K562 (cell line): ENCODE measurements at regions of chr22 and their contacts with region 1.

Region 1: GRCh38 chr22:40679964-40680818 is 907 bp downstream of the MCHR1 start:
- DNase-seq: no peak
- ATAC-seq: no peak
- H3K4me3 ChIP-seq: no peak overlapping the region
- H3K27ac ChIP-seq: no peak overlapping the region
- H3K4me1 ChIP-seq: peaks cover 0 to 13% of the 10 kb centered on the region in 2 experiments; a peak in 3 of 5 replicates
- H3K27me3 ChIP-seq: peaks cover 6 to 35% of the 10 kb centered on the region in 2 experiments; a peak in 4 of 5 replicates
- CTCF ChIP-seq: 0 out of 6 replicates have a peak, but pooled peaks of 1 of the 3 experiments have one; percentile 6
- EP300 ChIP-seq: no peak
- POLR2A ChIP-seq: no peak
- RAD21 ChIP-seq: no peak

Region 2: DNA sequence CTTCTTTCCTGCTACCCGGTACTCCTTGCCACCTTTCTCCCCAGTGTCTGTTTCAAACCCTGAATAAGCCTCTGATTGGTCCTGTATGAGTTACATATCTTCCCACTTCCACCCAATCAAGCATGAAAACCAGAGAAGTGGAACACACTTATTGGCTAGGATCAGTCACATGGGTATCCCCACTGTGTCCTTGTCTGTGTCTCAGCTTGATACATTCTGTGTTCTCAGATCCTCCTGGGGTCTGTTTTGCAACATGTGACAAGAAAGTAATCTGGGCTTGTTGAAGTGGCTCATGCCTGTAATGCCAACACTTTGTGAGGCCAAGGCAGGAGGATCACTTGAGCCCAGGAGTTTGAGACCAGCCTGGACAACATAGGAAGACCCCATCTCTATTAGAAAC is 23.0 kb after region 1 on chr22:
- CTCF ChIA-PET with region 1: no interaction called
- POLR2A ChIA-PET with region 1: no interaction called
- in situ Hi-C with region 1: no loop called
- intact Hi-C with region 1: no loop called
- DNase-seq: peak in 1 of 4 experiments; percentile 42
- ATAC-seq: peak; percentile 58; the same call in 2 of the 3 replicates
- H3K4me3 ChIP-seq: no peak overlapping the region
- H3K27ac ChIP-seq: no peak overlapping the region
- H3K4me1 ChIP-seq: peaks cover 0 to 3% of the 10 kb centered on the region in 2 experiments; a peak in 1 of 5 replicates
- H3K27me3 ChIP-seq: peaks cover 1 to 4% of the 10 kb centered on the region in 2 experiments; a peak in 2 of 5 replicates
- CTCF ChIP-seq: no peak
- EP300 ChIP-seq: no peak
- POLR2A ChIP-seq: no peak
- RAD21 ChIP-seq: no peak

Region 3: GRCh38 chr22:40757071-40757470 is 76.9 kb after region 1 on chr22:
- CTCF ChIA-PET with region 1: interaction called, 12 read pairs
- POLR2A ChIA-PET with region 1: no interaction called
- in situ Hi-C with region 1: loop called (anchors 10 kb)
- intact Hi-C with region 1: loop called (anchors 1 kb)
- DNase-seq: no peak
- ATAC-seq: no peak
- H3K4me3 ChIP-seq: no peak overlapping the region
- H3K27ac ChIP-seq: no peak overlapping the region
- H3K4me1 ChIP-seq: peaks cover 0 to 3% of the 10 kb centered on the region in 2 experiments; a peak in 1 of 5 replicates
- H3K27me3 ChIP-seq: peaks cover 3 to 13% of the 10 kb centered on the region in 2 experiments; a peak in 3 of 5 replicates
- CTCF ChIP-seq: no peak
- EP300 ChIP-seq: no peak
- POLR2A ChIP-seq: no peak
- RAD21 ChIP-seq: no peak

Region 4: DNA sequence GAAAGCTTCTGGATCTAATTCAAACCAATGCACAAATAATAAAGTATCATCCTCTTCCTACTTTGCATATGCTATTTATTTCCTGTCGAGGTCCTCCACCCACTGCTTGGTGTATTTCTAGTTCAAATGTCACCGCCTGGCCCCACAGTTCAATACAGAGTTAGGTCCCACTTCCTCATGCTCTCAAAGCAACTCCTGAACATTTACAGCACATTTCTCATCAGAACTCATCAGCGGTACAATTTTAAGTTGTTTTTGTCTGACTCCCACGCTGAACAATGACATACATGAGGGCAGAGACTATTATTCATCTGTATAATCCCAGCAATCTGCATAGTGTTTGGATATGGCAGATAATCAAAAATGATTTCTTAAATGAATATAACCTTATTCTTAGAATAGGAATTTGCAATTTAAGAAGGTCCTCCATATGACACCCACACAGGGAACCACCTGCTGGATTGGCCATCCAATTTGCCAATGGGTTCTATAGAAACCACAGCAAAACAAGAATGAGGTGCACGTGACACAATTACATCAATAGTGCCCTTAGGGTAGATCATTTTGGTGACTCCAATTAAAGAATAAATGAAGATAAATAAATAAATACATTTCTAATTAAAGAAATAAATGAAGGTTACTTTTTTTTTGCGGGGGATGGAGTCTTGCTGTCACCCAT is 84.7 kb after region 1 on chr22:
- CTCF ChIA-PET with region 1: interaction called, 12 read pairs
- POLR2A ChIA-PET with region 1: no interaction called
- in situ Hi-C with region 1: no loop called
- intact Hi-C with region 1: loop called (anchors 1 kb)
- DNase-seq: no peak
- ATAC-seq: no peak
- H3K4me3 ChIP-seq: no peak overlapping the region
- H3K27ac ChIP-seq: no peak overlapping the region
- H3K4me1 ChIP-seq: no peaks in the 10 kb centered on the region
- H3K27me3 ChIP-seq: no peaks in the 10 kb centered on the region
- CTCF ChIP-seq: no peak
- EP300 ChIP-seq: no peak
- POLR2A ChIP-seq: no peak
- RAD21 ChIP-seq: no peak

Region 5: DNA sequence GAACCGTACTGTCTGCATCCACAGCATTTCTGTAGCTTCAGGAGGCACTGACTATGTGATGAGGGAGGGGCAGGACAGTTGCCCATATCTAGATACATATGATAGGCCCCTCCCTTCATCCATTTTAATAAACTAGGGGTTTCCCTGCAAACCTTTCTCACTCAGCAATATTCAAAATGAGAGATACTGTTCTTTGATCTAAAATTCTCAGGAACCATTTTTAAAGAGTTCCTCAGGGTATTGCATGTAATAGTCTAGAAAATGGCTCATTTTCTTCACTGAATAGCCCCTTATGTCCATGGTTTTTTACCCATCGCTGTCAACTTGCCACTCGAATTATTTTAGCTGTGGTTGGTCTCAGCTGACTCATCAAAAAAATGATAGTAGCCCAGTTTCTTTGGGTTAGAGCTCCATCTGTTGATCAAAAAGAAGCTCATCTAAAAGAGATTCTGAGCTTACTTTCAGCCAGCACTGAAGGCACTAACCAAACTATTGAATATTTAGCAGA is 218.7 kb after region 1 on chr22:
- CTCF ChIA-PET with region 1: interaction called, 4 read pairs
- POLR2A ChIA-PET with region 1: no interaction called
- in situ Hi-C with region 1: no loop called
- intact Hi-C with region 1: loop called (anchors 1 kb)
- DNase-seq: peak; percentile 23 to 66 (median 34)
- ATAC-seq: peak; percentile 74
- H3K4me3 ChIP-seq: no peak overlapping the region
- H3K27ac ChIP-seq: 0 out of 3 replicates have a peak overlapping the region, but pooled peaks have one; percentile 38
- H3K4me1 ChIP-seq: peaks cover 0 to 4% of the 10 kb centered on the region in 2 experiments; a peak in 2 of 5 replicates
- H3K27me3 ChIP-seq: no peaks in the 10 kb centered on the region
- CTCF ChIP-seq: peak; percentile 37 to 71 (median 58); a peak in 5 of 6 replicates
- EP300 ChIP-seq: no peak
- POLR2A ChIP-seq: no peak
- RAD21 ChIP-seq: peak; percentile 65 to 75